GM10248 (cell line): ENCODE measurements at regions of chr20 and their contacts with region 1.

Region 1: DNA sequence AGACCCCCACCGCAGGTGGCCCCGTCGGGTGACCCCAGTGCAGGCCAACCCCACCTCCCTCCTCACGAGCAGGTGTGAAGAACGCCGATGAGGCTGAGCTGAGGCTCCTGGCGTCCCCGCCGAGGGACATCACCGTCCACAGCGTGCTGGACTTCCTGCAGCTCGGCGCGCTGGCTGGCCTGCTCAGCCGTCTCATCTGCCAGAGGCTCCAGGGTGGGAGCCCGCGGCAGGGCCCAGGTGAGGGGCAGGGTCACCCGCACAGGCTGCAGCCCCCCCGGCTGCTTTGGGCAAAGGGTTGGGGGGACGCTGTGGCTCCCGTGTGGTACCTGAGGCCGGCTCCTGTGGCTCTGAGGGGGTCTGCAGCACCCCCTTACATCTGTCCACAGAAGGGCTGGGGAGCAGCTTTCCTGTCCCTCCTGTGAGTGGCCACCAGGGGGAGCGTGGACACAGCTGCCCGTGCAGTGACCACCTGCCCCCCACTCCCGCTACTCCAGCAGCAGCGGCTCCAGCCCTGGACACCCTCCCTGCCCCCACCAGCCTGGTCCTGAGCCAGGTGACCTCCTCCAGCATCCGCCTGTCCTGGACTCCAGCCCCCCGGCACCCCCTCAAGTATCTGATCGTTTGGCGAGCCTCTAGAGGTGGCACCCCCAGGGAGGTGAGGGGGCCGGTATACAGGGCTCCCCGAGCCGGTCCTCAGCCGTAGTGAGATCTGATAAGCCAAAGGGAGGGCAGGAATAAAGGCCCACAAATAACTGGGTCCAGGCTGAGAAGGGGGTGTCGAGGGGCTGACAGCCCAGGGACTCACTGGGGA is 16.5 kb downstream of the COL20A1 start:
- DNase-seq: peak; percentile 69
- CTCF ChIP-seq: peak; percentile 57

Region 2: GRCh38 chr20:63272584-63273579 is 36.6 kb before region 1 on chr20 and contains the start of gene ARFGAP1:
- CTCF ChIA-PET with region 1: no interaction called
- POLR2A ChIA-PET with region 1: no interaction called
- DNase-seq: peak; percentile 99
- CTCF ChIP-seq: no peak

Region 3: GRCh38 chr20:63381807-63382322 is 72.4 kb after region 1 on chr20:
- CTCF ChIA-PET with region 1: interaction called, 18 read pairs
- POLR2A ChIA-PET with region 1: no interaction called
- DNase-seq: peak; percentile 77
- CTCF ChIP-seq: peak; percentile 82